ENCODE measurements at regions of chr7 and their contacts with region 1.

Region 1: GRCh38 chr7:114085592-114086501 is 167.0 kb upstream of the PPP1R3A start:
- DNase-seq: peak; percentile 13
- H3K4me3 Mint-ChIP-seq: peak overlapping the region; percentile 82
- H3K27ac Mint-ChIP-seq: peak overlapping the region; percentile 33
- H3K4me1 Mint-ChIP-seq: peaks cover 36% of the 10 kb centered on the region
- H3K27me3 Mint-ChIP-seq: peaks cover 74% of the 10 kb centered on the region

Region 2: GRCh38 chr7:114405427-114405826 is 319.6 kb after region 1 on chr7:
- intact Hi-C with region 1: loop called (anchors 10 kb)
- DNase-seq: no peak
- H3K4me3 Mint-ChIP-seq: no peak overlapping the region
- H3K27ac Mint-ChIP-seq: no peak overlapping the region
- H3K4me1 Mint-ChIP-seq: no peaks in the 10 kb centered on the region
- H3K27me3 Mint-ChIP-seq: no peaks in the 10 kb centered on the region

Region 3: GRCh38 chr7:115475761-115476385 is 1390.0 kb after region 1 on chr7:
- intact Hi-C with region 1: loop called (anchors 10 kb)
- DNase-seq: no peak
- H3K4me3 Mint-ChIP-seq: no peak overlapping the region
- H3K27ac Mint-ChIP-seq: no peak overlapping the region
- H3K4me1 Mint-ChIP-seq: peaks cover 5% of the 10 kb centered on the region
- H3K27me3 Mint-ChIP-seq: peaks cover 26% of the 10 kb centered on the region

Region 4: DNA sequence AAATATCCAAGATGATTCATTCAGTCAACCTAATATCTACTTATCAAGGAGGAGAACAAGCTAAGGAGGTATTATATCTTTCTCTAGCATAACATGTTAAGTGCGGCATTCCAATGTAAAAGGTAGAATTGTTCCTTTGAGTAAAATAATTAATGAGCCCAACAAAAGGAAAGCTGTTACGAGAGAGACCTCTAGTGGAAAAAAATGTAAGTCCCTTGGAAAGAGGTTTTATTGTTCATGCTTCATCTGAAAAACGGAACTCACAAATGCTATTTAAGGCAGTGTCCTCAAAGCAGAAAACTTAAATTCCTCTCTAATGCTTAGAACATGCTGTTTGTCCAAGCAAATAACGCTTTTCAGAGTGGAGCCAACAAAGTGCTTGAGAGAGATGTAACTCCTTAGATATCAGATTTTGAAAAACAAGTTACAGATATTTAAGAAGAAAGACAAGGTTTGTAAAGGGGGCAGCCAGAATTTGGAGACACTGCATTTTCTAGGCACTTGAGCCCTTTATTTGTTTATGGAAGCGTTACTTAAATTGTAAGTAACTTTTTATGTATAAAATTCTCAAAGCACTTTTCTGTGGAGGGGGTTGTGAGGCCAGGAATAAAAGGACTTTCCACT is 1824.8 kb after region 1 on chr7:
- intact Hi-C with region 1: loop called (anchors 1 kb)
- DNase-seq: no peak
- H3K4me3 Mint-ChIP-seq: no peak overlapping the region
- H3K27ac Mint-ChIP-seq: no peak overlapping the region
- H3K4me1 Mint-ChIP-seq: no peaks in the 10 kb centered on the region
- H3K27me3 Mint-ChIP-seq: no peaks in the 10 kb centered on the region